ENCODE measurements at regions of chrX and their contacts with region 1.

Region 1: GRCh38 chrX:77910108-77910840 is at the start of gene ATP7A:
- DNase-seq: peak; percentile 95
- ATAC-seq: peak; percentile 97
- total RNA-seq, gene ATP7A: 5.4 TPM

Region 2: GRCh38 chrX:78024349-78025108 is 114.3 kb after region 1 on chrX:
- intact Hi-C with region 1: loop called (anchors 5 kb)
- DNase-seq: no peak
- ATAC-seq: no peak

Measured in Right ventricle myocardium inferior (tissue), 1 donor.